Caco-2 (cell line): ENCODE measurements at regions of chr19 and their contacts with region 1.

Region 1: GRCh38 chr19:56066152-56067023 is 54.7 kb downstream of the ZNF787 start:
- DNase-seq: peak; percentile 77 to 81
- H3K4me3 ChIP-seq: no peak overlapping the region
- H3K4me3 Mint-ChIP-seq: peak overlapping the region; percentile 52
- H3K27ac Mint-ChIP-seq: no peak overlapping the region
- H3K4me1 ChIP-seq: 0 out of 2 replicates have a peak, but pooled peaks cover 3% of the 10 kb centered on the region
- H3K4me1 Mint-ChIP-seq: no peaks in the 10 kb centered on the region
- H3K27me3 ChIP-seq: no peaks in the 10 kb centered on the region
- H3K27me3 Mint-ChIP-seq: peaks cover 18% of the 10 kb centered on the region
- CTCF ChIP-seq: peak; percentile 95 to 96

Region 2: DNA sequence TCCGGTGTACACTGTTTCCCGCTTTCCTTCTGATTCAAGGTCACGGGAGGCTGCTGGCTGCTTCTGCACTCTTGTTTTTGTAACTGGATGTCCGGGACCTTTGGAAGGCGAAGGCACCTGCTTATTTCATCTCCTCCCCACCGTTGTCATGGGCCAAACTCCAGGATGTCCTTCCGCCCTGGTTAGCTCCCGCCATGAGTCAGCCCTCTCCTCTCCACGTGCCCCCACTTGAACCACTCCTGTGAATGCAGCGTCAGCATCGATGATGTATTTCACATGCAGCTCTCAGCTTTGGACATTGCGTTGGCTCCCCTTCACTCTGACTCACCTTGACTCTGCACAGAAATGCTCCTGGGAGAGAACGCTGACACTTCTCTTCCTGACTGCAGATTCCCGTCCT is 103.9 kb after region 1 on chr19:
- CTCF ChIA-PET with region 1: interaction called, 8 read pairs
- POLR2A ChIA-PET with region 1: no interaction called
- intact Hi-C with region 1: loop called (anchors 1 kb)
- DNase-seq: no peak
- H3K4me3 ChIP-seq: no peak overlapping the region
- H3K4me3 Mint-ChIP-seq: no peak overlapping the region
- H3K27ac Mint-ChIP-seq: no peak overlapping the region
- H3K4me1 ChIP-seq: no peaks in the 10 kb centered on the region
- H3K4me1 Mint-ChIP-seq: peaks cover 1% of the 10 kb centered on the region
- H3K27me3 ChIP-seq: no peaks in the 10 kb centered on the region
- H3K27me3 Mint-ChIP-seq: peaks cover 6% of the 10 kb centered on the region
- CTCF ChIP-seq: no peak

Region 3: DNA sequence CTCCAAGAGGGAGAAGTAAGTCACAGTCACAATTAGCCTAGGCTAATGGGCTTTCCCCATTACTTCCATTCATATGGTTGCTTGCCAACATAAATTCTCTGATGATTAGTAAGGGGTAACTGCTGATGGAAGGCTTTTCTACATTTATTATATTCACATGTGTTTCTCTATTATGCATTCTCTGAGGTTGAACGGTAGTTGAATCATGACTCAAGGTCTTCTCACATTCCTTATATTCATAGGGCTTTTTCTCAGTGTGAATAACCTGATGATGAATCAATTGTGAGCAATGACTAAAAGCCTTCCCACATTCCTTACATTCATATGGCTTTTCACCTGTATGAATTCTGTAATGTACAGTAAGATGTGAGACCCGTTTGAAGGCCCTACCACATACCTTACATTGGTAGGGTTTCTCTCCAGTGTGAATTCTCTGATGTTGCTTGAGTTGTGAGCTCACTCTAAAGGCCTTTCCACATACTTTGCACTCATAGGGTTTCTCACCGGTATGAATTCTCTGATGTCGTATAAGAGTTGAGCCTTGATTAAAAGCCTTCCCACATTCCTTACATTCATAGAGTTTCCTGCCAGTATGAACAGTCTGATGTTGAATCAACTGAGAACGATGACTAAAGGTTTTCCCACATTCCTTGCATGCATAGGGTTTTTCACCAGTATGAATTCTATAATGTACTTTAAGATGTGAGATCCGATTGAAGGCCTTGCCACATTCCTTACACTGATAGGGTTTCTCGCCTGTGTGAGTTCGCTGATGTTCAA is 317.6 kb after region 1 on chr19:
- CTCF ChIA-PET with region 1: interaction called, 10 read pairs
- POLR2A ChIA-PET with region 1: no interaction called
- intact Hi-C with region 1: no loop called
- DNase-seq: no peak
- H3K4me3 ChIP-seq: no peak overlapping the region
- H3K4me3 Mint-ChIP-seq: no peak overlapping the region
- H3K27ac Mint-ChIP-seq: no peak overlapping the region
- H3K4me1 ChIP-seq: no peaks in the 10 kb centered on the region
- H3K4me1 Mint-ChIP-seq: no peaks in the 10 kb centered on the region
- H3K27me3 ChIP-seq: no peaks in the 10 kb centered on the region
- H3K27me3 Mint-ChIP-seq: no peaks in the 10 kb centered on the region
- CTCF ChIP-seq: no peak